ENCODE measurements at regions of chr21 and their contacts with region 1.

Region 1: DNA sequence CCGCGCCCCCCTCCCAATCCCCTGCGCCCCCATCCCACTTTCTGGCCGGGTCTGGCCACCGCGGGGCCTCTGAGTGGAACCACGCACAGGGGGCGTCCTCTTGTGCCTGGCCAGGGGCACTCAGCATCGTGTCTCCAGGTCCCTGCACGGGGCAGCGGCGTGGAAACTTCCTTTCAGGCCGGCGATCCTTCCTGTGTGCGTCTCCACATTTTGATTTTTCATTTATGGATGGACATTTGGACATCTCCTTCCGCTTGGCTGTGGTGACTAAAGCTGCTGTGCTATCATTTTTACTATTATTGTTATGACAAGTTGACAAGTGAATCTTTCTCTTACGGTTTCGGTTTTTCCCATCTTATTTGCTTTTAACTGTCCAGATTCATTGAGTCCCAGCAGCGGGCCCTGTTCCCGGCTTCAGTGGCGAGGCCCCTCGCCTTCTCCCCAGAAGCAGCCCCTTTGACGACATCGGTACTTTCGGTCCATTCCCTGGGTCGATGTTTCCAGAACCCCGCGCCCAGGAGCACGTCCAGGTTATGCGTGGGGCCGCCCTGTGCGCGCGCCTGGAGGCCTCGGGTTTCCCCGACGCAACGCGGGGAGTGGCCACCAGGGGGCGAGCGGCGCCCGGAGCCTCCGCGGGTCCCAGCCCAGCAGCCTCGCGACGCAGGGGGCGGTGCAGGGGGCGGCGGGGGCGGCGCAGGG is 12.4 kb upstream of the SLC19A1 start:
- DNase-seq: no peak
- H3K4me3 ChIP-seq: peak overlapping the region; percentile 30 to 82 (median 52)
- H3K27ac ChIP-seq: peak overlapping the region; percentile 44 to 83 (median 52)
- H3K4me1 ChIP-seq: peaks cover 6 to 44% (median 15%) of the 10 kb centered on the region in 3 donors
- H3K27me3 ChIP-seq: peaks cover 0 to 47% (median 0%) of the 10 kb centered on the region in 4 donors
- CTCF ChIP-seq: peak; percentile 76 to 93 (median 90)
- POLR2A ChIP-seq: peak in 1 of 4 donors; percentile 50

Region 2: GRCh38 chr21:45596704-45597318 is 42.2 kb after region 1 on chr21:
- intact Hi-C with region 1: loop called (anchors 5 kb)
- DNase-seq: no peak
- H3K4me3 ChIP-seq: no peak overlapping the region
- H3K27ac ChIP-seq: no peak overlapping the region
- H3K4me1 ChIP-seq: peaks cover 0 to 6% (median 0%) of the 10 kb centered on the region in 3 donors
- H3K27me3 ChIP-seq: peaks cover 0 to 43% (median 2%) of the 10 kb centered on the region in 4 donors
- CTCF ChIP-seq: peak; percentile 59 to 86 (median 78)
- POLR2A ChIP-seq: no peak

Region 3: DNA sequence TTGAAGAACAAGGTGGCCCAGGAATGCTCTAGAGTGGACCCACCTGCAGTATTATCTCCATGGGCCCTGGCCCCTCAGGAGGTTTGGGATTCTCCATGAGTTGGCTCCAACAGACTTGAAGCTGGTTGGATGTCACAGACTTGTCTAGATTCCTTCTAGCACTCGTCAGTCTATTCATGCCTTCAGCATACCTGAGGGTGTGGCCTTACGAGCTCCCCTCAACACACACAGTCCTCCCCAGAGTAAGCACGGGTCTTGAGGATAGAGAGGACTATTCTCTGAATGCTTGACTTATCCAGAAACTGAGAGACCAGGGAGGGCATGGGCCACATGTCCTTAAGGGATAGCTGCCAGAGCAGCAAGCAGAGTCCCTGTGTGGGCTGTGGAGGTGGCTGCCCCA is 381.0 kb after region 1 on chr21:
- intact Hi-C with region 1: no loop called
- DNase-seq: no peak
- H3K4me3 ChIP-seq: no peak overlapping the region
- H3K27ac ChIP-seq: no peak overlapping the region
- H3K4me1 ChIP-seq: no peaks in the 10 kb centered on the region
- H3K27me3 ChIP-seq: no peaks in the 10 kb centered on the region
- CTCF ChIP-seq: no peak
- POLR2A ChIP-seq: no peak

Measured in esophagus squamous epithelium (tissue), 5 donors.